Activated T-helper 2 cell treated with anti-CD3 and anti-CD28 coated beads, Interferon-gamma antibody, Interleukin-2, Interleukin-4, amounts not matched to agents 10 μg/mL and 5 μg/mL and 100 μg/mL, durations not matched to agents 14 hours and 24 hours and 36 hours (primary cell): ENCODE measurements at regions of chr19 and their contacts with region 1.

Region 1: GRCh38 chr19:45423589-45424190 is at the start of gene ERCC1:
- DNase-seq: peak; percentile 79
- H3K4me3 Mint-ChIP-seq: peak within 1 kb of the TSS; percentile 93
- H3K27ac Mint-ChIP-seq: peak within 1 kb of the TSS; percentile 96
- H3K4me1 Mint-ChIP-seq: peaks cover 45% of the 10 kb centered on the region
- H3K27me3 Mint-ChIP-seq: peaks cover 7% of the 10 kb centered on the region
- total RNA-seq, gene ERCC1: 114 and 118 TPM in 2 replicates

Region 2: DNA sequence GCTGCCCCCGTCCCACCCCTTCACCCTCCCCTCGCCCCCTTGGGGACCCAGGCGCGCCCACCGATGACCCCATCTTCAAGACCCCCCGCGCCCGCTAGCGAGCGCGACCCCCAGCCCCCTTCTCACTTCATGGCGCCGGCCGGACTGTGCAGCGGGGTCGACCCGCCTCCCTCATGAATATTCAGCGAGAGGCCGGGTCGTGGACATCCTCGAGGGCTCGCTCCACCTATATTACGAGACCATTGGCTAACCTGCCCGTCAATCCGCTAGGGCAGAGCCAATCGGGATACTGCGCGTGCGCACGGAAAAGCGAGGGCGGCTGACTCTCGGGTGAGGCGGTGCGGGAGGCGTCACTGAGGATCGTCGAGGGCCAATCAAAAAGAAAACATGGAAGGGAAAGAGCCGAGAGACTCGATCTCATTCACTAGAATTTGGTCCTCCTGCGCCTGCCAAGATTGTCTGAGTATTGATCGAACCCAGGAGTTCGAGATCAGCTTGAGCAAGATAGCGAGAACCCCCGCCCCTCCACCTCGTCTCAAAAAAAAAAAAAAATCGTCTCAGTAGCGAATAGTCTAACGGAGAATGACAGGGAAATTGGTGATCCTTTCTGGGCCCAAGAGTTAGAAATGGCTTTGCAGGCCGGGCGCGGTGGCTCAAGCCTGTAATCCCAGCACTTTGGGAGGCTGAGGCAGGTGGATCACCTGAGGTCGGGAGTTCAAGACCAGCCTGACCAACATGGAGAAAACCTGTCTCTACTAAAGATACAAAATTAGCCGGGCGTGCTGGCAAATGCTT is 53.1 kb before region 1 on chr19 and contains the start of gene ERCC2:
- intact Hi-C with region 1: loop called (anchors 5 kb)
- DNase-seq: peak; percentile 100
- H3K4me3 Mint-ChIP-seq: peak within 1 kb of the TSS; percentile 87
- H3K27ac Mint-ChIP-seq: peak within 1 kb of the TSS; percentile 99
- H3K4me1 Mint-ChIP-seq: peaks cover 14% of the 10 kb centered on the region
- H3K27me3 Mint-ChIP-seq: no peaks in the 10 kb centered on the region
- total RNA-seq, gene ERCC2: 32.6 and 34.5 TPM in 2 replicates

Region 3: DNA sequence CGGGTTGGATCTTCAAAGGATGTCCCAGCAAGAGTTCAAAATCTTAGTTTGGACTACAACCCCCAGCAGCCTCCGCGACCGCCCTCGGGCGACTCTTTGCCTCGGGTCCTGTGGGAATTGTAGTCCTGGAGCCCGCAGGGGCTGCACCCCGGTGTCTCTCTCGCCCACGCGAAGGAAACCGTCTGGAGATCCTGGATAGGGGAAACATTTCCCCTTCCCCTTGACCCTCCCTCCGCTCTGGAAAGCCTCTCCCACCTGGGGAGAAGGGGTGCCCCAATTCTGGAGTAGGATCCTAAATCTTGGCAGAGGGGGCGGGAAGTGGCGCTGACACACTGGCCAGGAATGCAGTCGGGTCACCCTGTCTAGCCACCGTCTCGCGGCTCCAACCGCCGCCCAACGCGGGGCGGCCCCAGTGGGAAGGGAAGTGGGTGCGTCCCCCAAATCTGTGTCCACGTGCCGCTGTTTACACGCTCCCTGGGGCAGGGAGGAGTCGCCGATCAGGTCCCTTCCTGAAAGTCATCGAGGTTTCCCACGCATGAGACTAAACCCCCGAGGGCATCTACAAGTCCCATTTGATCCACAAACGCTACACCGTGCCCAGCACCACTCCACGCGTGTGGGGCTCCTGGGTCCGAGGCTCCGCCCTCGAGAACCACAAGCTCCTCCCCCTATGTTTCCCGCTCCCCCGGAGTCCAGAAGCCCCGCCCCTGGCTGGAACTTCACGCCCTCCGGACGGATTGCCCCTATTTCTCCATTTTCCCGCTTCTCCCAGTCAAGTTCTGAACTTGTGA is 18.1 kb before region 1 on chr19:
- intact Hi-C with region 1: loop called (anchors 1 kb)
- DNase-seq: peak; percentile 77
- H3K4me3 Mint-ChIP-seq: peak overlapping the region; percentile 99
- H3K27ac Mint-ChIP-seq: peak overlapping the region; percentile 92
- H3K4me1 Mint-ChIP-seq: peaks cover 37% of the 10 kb centered on the region
- H3K27me3 Mint-ChIP-seq: peaks cover 11% of the 10 kb centered on the region

Region 4: GRCh38 chr19:45439569-45440254 is 16.0 kb after region 1 on chr19:
- intact Hi-C with region 1: loop called (anchors 1 kb)
- DNase-seq: peak; percentile 78
- H3K4me3 Mint-ChIP-seq: peak overlapping the region; percentile 69
- H3K27ac Mint-ChIP-seq: peak overlapping the region; percentile 67
- H3K4me1 Mint-ChIP-seq: peaks cover 23% of the 10 kb centered on the region
- H3K27me3 Mint-ChIP-seq: peaks cover 2% of the 10 kb centered on the region

Region 5: DNA sequence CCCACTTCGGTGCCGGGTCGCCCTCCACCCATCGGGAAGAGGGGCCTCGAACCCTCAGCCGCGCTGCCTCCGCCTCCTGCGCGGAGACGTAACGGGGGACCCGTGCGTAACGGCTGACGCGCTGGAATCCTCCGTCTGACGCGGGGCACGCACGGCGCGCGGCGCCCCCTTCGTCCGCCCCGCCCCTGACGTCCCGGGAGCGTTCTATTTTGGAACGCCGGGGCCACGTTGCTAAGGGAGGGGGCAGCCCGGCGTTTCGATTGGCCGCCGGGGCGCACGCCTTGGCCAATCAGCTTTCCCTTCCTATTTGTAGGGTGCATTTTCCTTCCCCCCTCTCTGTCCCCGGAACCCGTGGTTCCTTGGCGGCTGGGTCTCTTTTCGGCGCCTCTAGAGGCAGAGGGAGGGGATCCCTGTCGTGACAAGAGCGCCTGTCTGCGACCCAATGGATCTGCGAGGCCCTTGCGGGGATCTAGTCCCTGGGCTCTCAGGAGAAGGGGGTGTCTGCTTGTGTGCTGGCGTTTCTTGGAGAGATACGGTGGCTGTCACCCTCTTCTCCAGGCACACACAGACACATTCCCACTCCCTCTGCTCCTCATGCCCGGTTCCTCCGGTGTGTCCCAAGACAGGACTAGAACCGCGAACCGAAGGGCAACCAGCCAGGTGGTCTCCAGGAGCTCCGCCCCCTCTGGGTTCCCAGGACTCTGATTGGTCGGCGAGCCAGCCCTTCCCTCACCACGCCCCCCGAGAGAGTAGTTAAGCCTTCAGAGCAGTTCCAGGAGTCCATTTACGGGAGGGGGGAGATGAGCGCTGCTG is 45.6 kb after region 1 on chr19:
- intact Hi-C with region 1: loop called (anchors 1 kb)
- DNase-seq: peak; percentile 93
- H3K4me3 Mint-ChIP-seq: peak overlapping the region; percentile 86
- H3K27ac Mint-ChIP-seq: peak overlapping the region; percentile 91
- H3K4me1 Mint-ChIP-seq: peaks cover 23% of the 10 kb centered on the region
- H3K27me3 Mint-ChIP-seq: peaks cover 44% of the 10 kb centered on the region

Region 6: DNA sequence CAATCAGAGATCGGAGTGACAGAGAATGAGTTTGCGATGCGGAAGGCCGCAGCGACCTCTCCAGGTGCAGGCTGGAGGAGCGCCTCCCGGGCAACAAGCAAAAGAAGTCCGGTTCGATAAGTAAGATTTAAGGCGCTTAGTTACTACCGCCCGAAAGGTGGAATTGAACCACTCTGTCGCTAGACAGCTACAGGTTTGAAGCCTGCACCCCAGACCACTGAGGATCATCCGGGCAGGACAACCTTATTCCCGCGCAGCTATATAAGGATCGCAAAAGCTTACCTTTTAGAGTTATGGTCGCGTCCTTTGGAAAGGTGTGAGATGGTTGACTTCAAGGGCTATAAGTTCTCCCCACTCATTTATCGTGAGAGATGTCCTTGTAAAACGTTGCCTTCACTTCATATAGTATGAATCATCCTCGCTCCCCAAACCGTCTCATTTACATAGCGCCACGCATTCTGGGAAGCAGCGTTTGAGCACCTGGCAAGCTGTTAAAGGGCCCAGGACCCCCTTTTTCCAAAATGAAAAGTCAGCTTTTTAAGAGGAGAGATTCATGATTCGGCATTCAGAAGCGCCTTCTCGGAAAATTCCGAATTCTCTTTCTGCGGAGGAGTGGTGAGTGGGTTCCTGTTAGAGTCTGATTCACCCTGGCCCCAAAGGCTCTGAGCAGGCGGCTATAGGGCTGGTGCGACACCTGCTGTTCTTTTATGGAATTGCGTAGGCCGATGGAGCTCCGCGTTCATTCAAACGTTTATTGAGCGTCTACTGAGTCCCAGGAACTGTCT is 55.0 kb after region 1 on chr19:
- intact Hi-C with region 1: loop called (anchors 1 kb)
- DNase-seq: peak; percentile 88
- H3K4me3 Mint-ChIP-seq: peak overlapping the region; percentile 67
- H3K27ac Mint-ChIP-seq: peak overlapping the region; percentile 98
- H3K4me1 Mint-ChIP-seq: peaks cover 27% of the 10 kb centered on the region
- H3K27me3 Mint-ChIP-seq: peaks cover 25% of the 10 kb centered on the region

Region 7: GRCh38 chr19:45584332-45585157 is 160.9 kb after region 1 on chr19 and contains the start of gene OPA3:
- intact Hi-C with region 1: loop called (anchors 10 kb)
- DNase-seq: peak; percentile 98
- H3K4me3 Mint-ChIP-seq: peak within 1 kb of the TSS; percentile 89
- H3K27ac Mint-ChIP-seq: peak within 1 kb of the TSS; percentile 97
- H3K4me1 Mint-ChIP-seq: peaks cover 9% of the 10 kb centered on the region
- H3K27me3 Mint-ChIP-seq: peaks cover under 1% of the 10 kb centered on the region
- total RNA-seq, gene OPA3: 15.2 and 15.9 TPM in 2 replicates

Region 8: DNA sequence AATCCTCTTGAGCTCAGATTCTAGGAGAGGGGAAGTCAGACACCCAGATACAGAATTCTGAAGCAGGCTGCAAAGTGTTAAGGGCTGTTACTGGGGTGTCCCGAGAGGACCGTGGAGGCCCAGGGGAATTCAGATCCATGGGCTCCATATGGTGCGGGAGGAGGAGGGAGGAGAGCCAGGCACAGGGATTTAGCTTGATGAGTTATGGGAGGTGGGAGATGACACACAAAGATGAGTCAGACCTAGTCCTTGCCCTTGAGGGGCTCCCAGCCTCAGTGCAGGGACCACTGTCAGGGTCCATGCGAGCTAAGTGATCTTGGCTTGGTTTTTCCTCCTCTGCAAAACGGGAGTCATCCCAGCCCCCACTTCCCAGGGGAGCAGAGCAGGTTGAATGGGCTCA is 229.9 kb after region 1 on chr19:
- intact Hi-C with region 1: no loop called
- DNase-seq: no peak
- H3K4me3 Mint-ChIP-seq: no peak overlapping the region
- H3K27ac Mint-ChIP-seq: no peak overlapping the region
- H3K4me1 Mint-ChIP-seq: no peaks in the 10 kb centered on the region
- H3K27me3 Mint-ChIP-seq: peaks cover under 1% of the 10 kb centered on the region